CD8-positive, alpha-beta T cell (primary cell): ENCODE measurements at regions of chr17 and their contacts with region 1.

Region 1: GRCh38 chr17:1186923-1187771 is 7.4 kb upstream of the ABR start:
- DNase-seq: peak; percentile 54 to 85 (median 71)
- ATAC-seq: peak; percentile 97
- H3K4me3 ChIP-seq: no peak overlapping the region
- H3K4me3 Mint-ChIP-seq: no peak overlapping the region
- H3K27ac ChIP-seq: no peak overlapping the region
- H3K27ac Mint-ChIP-seq: no peak overlapping the region
- H3K4me1 ChIP-seq: no peaks in the 10 kb centered on the region
- H3K4me1 Mint-ChIP-seq: peaks cover 9% of the 10 kb centered on the region
- H3K27me3 ChIP-seq: no peaks in the 10 kb centered on the region
- H3K27me3 Mint-ChIP-seq: no peaks in the 10 kb centered on the region
- CTCF ChIP-seq: peak; percentile 78

Region 2: GRCh38 chr17:1058423-1059130 is 128.6 kb before region 1 on chr17:
- CTCF ChIA-PET with region 1: interaction called, 3 read pairs
- POLR2A ChIA-PET with region 1: no interaction called
- intact Hi-C with region 1: loop called in 1 of 2 experiments (anchors 2 kb)
- DNase-seq: peak in 7 of 9 experiments; percentile 21 to 55 (median 41)
- ATAC-seq: no peak
- H3K4me3 ChIP-seq: no peak overlapping the region
- H3K4me3 Mint-ChIP-seq: no peak overlapping the region
- H3K27ac ChIP-seq: no peak overlapping the region
- H3K27ac Mint-ChIP-seq: peak overlapping the region; percentile 6
- H3K4me1 ChIP-seq: no peaks in the 10 kb centered on the region
- H3K4me1 Mint-ChIP-seq: no peaks in the 10 kb centered on the region
- H3K27me3 ChIP-seq: no peaks in the 10 kb centered on the region
- H3K27me3 Mint-ChIP-seq: no peaks in the 10 kb centered on the region
- CTCF ChIP-seq: no peak

Region 3: GRCh38 chr17:1108861-1109605 is 78.1 kb before region 1 on chr17:
- CTCF ChIA-PET with region 1: interaction called, 10 read pairs
- POLR2A ChIA-PET with region 1: no interaction called
- intact Hi-C with region 1: loop called in 1 of 2 experiments (anchors 5 kb)
- DNase-seq: peak; percentile 34 to 87 (median 69)
- ATAC-seq: peak; percentile 82
- H3K4me3 ChIP-seq: peak overlapping the region; percentile 68 to 70
- H3K4me3 Mint-ChIP-seq: peak overlapping the region; percentile 84
- H3K27ac ChIP-seq: peak overlapping the region; percentile 60 to 71
- H3K27ac Mint-ChIP-seq: peak overlapping the region; percentile 82
- H3K4me1 ChIP-seq: peaks cover 24% of the 10 kb centered on the region
- H3K4me1 Mint-ChIP-seq: peaks cover 26% of the 10 kb centered on the region
- H3K27me3 ChIP-seq: no peaks in the 10 kb centered on the region
- H3K27me3 Mint-ChIP-seq: no peaks in the 10 kb centered on the region
- CTCF ChIP-seq: no peak

Region 4: GRCh38 chr17:1197781-1198490 is 10.8 kb after region 1 on chr17:
- CTCF ChIA-PET with region 1: interaction called, 97 read pairs
- POLR2A ChIA-PET with region 1: interaction called, 11 read pairs
- intact Hi-C with region 1: no loop called
- DNase-seq: peak; percentile 55 to 92 (median 77)
- ATAC-seq: peak; percentile 52
- H3K4me3 ChIP-seq: peak overlapping the region in 1 of 2 experiments; percentile 10
- H3K4me3 Mint-ChIP-seq: peak overlapping the region; percentile 61
- H3K27ac ChIP-seq: peak overlapping the region; percentile 29 to 49
- H3K27ac Mint-ChIP-seq: peak overlapping the region; percentile 86
- H3K4me1 ChIP-seq: peaks cover 61% of the 10 kb centered on the region
- H3K4me1 Mint-ChIP-seq: peaks cover 57% of the 10 kb centered on the region
- H3K27me3 ChIP-seq: no peaks in the 10 kb centered on the region
- H3K27me3 Mint-ChIP-seq: no peaks in the 10 kb centered on the region
- CTCF ChIP-seq: no peak

Region 5: GRCh38 chr17:1211287-1211686 is 24.1 kb after region 1 on chr17:
- CTCF ChIA-PET with region 1: interaction called, 12 read pairs
- POLR2A ChIA-PET with region 1: no interaction called
- intact Hi-C with region 1: no loop called
- DNase-seq: no peak
- ATAC-seq: no peak
- H3K4me3 ChIP-seq: no peak overlapping the region
- H3K4me3 Mint-ChIP-seq: no peak overlapping the region
- H3K27ac ChIP-seq: no peak overlapping the region
- H3K27ac Mint-ChIP-seq: no peak overlapping the region
- H3K4me1 ChIP-seq: no peaks in the 10 kb centered on the region
- H3K4me1 Mint-ChIP-seq: no peaks in the 10 kb centered on the region
- H3K27me3 ChIP-seq: no peaks in the 10 kb centered on the region
- H3K27me3 Mint-ChIP-seq: peaks cover 2% of the 10 kb centered on the region
- CTCF ChIP-seq: no peak